Naive thymus-derived CD4-positive, alpha-beta T cell (primary cell): ENCODE measurements at regions of chr12 and their contacts with region 1.

Region 1: GRCh38 chr12:48903982-48904411 is 21.3 kb downstream of the FKBP11 start:
- DNase-seq: peak; percentile 64 to 89 (median 83)
- ATAC-seq: peak; percentile 100
- H3K4me3 ChIP-seq: peak overlapping the region; percentile 60
- H3K4me3 Mint-ChIP-seq: peak overlapping the region; percentile 48 to 81 (median 78)
- H3K27ac ChIP-seq: no peak overlapping the region
- H3K27ac Mint-ChIP-seq: peak overlapping the region in 5 of 9 donors; percentile 32 to 84 (median 57)
- H3K4me1 ChIP-seq: peaks cover 0 to 9% of the 10 kb centered on the region in 2 donors
- H3K4me1 Mint-ChIP-seq: peaks cover 0 to 11% (median 8%) of the 10 kb centered on the region in 7 donors
- H3K27me3 ChIP-seq: no peaks in the 10 kb centered on the region
- H3K27me3 Mint-ChIP-seq: peaks cover 0 to 7% (median 0%) of the 10 kb centered on the region in 5 donors

Region 2: GRCh38 chr12:48788854-48789796 is 114.9 kb before region 1 on chr12 and contains the start of gene ADCY6:
- CTCF ChIA-PET with region 1: no interaction called
- POLR2A ChIA-PET with region 1: no interaction called
- intact Hi-C with region 1: no loop called
- DNase-seq: peak in 1 of 9 donors; percentile 8
- ATAC-seq: peak; percentile 34
- H3K4me3 ChIP-seq: no peak within 1 kb of the TSS
- H3K4me3 Mint-ChIP-seq: peak within 1 kb of the TSS; percentile 59 to 86 (median 66)
- H3K27ac ChIP-seq: no peak within 1 kb of the TSS
- H3K27ac Mint-ChIP-seq: no peak within 1 kb of the TSS
- H3K4me1 ChIP-seq: no peaks in the 10 kb centered on the region
- H3K4me1 Mint-ChIP-seq: peaks cover 5 to 14% (median 10%) of the 10 kb centered on the region in 7 donors
- H3K27me3 ChIP-seq: peaks cover 12 to 15% of the 10 kb centered on the region in 2 donors
- H3K27me3 Mint-ChIP-seq: peaks cover 44 to 65% (median 53%) of the 10 kb centered on the region in 5 donors
- total RNA-seq, gene ADCY6: 0.07 to 0.22 (median 0.08) TPM in 3 of 5 experiments, not detected in the others

Region 3: DNA sequence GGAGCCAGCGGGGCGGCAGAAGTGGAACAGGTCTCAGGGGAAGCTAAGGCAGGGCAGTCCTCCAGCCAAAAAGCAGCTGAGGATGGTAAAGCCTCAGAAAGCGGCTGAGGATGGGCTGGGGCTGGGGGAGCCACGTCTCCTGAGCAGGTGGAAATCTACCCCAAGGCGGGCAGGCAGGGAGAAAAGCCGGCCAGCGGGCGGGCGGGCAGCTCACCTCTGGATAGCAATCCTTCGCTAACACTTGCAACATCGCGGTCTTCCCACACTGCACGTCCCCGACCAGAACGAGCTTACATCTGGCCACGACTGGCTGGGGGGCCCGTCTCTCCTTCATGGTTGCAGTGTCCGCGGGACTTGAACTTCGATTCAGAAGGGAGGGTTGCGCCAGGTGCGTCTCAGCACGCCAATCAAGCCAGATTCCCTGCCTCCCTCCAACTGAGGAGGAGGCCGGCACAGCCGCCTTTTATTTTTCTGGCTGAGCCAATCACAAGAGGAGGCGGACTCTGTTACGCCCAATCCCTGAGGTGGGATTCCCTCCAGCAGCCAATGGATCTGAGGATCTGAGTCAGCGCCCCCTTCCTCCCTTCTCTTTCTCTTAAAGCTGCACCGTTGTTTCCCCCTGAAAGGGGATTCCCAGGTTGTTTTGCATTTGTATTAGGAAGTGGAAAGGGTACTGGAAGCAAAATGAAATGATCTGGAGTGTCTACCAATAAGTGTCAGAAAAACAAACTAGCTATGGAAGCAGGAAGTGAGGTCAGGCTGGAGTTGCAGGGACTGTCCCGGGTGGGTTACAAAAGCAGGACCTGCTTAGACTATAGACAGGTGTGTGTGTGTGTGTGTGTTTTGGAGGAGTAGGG is 38.3 kb before region 1 on chr12 and contains the start of gene RND1:
- CTCF ChIA-PET with region 1: no interaction called
- POLR2A ChIA-PET with region 1: no interaction called
- intact Hi-C with region 1: no loop called
- DNase-seq: peak; percentile 50 to 92 (median 82)
- ATAC-seq: peak; percentile 96
- H3K4me3 ChIP-seq: peak within 1 kb of the TSS; percentile 69
- H3K4me3 Mint-ChIP-seq: peak within 1 kb of the TSS; percentile 87 to 95 (median 94)
- H3K27ac ChIP-seq: peak within 1 kb of the TSS; percentile 62
- H3K27ac Mint-ChIP-seq: peak within 1 kb of the TSS; percentile 66 to 96 (median 85)
- H3K4me1 ChIP-seq: peaks cover 10 to 11% of the 10 kb centered on the region in 2 donors
- H3K4me1 Mint-ChIP-seq: peaks cover 15 to 28% (median 25%) of the 10 kb centered on the region in 7 donors
- H3K27me3 ChIP-seq: no peaks in the 10 kb centered on the region
- H3K27me3 Mint-ChIP-seq: peaks cover 23 to 40% (median 28%) of the 10 kb centered on the region in 5 donors
- total RNA-seq, gene RND1: 1.1 to 13.5 (median 2.3) TPM

Region 4: GRCh38 chr12:48890657-48891418 is 13.2 kb before region 1 on chr12:
- CTCF ChIA-PET with region 1: interaction called, 19 read pairs
- POLR2A ChIA-PET with region 1: interaction called, 3 read pairs
- intact Hi-C with region 1: no loop called
- DNase-seq: peak; percentile 51 to 79 (median 64)
- ATAC-seq: peak; percentile 97
- H3K4me3 ChIP-seq: no peak overlapping the region
- H3K4me3 Mint-ChIP-seq: peak overlapping the region in 4 of 10 donors; percentile 2 to 39 (median 16)
- H3K27ac ChIP-seq: no peak overlapping the region
- H3K27ac Mint-ChIP-seq: peak overlapping the region in 1 of 9 donors; percentile 65
- H3K4me1 ChIP-seq: peaks cover 8% of the 10 kb centered on the region in 2 donors
- H3K4me1 Mint-ChIP-seq: peaks cover 0 to 10% (median 0%) of the 10 kb centered on the region in 7 donors
- H3K27me3 ChIP-seq: peaks cover 0 to 4% of the 10 kb centered on the region in 2 donors
- H3K27me3 Mint-ChIP-seq: peaks cover 12 to 30% (median 15%) of the 10 kb centered on the region in 5 donors

Region 5: GRCh38 chr12:48917857-48918537 is 14.0 kb after region 1 on chr12:
- CTCF ChIA-PET with region 1: interaction called, 21 read pairs
- POLR2A ChIA-PET with region 1: interaction called, 9 read pairs
- intact Hi-C with region 1: loop called (anchors 1 kb)
- DNase-seq: peak in 7 of 9 donors; percentile 39 to 63 (median 57)
- ATAC-seq: peak; percentile 89
- H3K4me3 ChIP-seq: peak overlapping the region; percentile 57
- H3K4me3 Mint-ChIP-seq: peak overlapping the region; percentile 84 to 92 (median 88)
- H3K27ac ChIP-seq: peak overlapping the region; percentile 73
- H3K27ac Mint-ChIP-seq: peak overlapping the region; percentile 81 to 94 (median 90)
- H3K4me1 ChIP-seq: peaks cover 14 to 25% of the 10 kb centered on the region in 2 donors
- H3K4me1 Mint-ChIP-seq: peaks cover 20 to 46% (median 43%) of the 10 kb centered on the region in 7 donors
- H3K27me3 ChIP-seq: no peaks in the 10 kb centered on the region
- H3K27me3 Mint-ChIP-seq: no peaks in the 10 kb centered on the region

Region 6: DNA sequence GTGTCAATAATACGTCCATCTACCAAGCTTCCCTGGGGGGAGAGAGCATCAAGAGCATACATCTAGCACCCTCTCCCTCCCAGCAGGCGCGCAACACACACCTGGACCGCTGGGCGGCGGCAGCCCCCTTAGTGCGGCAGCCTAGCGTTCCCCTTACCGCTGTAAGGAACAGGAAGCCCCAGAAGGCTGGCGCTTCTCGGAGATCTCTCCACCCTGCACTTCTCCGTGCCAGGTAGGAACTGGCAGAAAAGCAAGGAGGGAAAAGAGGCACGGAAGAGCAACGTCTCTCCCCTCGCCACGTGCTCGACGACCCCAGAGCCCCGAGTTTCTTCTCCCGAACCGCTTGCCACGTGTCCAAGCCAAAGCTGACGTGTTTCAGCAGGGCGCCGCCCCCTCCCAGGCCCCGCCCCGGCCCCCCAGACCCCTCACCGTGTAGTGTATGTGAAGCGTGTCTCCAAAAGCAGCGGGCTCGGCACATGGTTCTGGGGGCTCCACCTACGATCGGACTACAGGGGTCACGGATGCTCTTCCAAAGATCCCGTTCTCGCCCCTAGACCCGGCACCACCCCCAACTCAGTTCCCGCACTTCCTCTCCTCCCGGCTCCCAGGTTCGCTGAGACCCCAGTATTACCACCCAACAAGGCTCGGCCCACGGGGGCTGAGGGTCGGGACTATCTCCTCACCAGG is 20.8 kb after region 1 on chr12:
- CTCF ChIA-PET with region 1: interaction called, 21 read pairs
- POLR2A ChIA-PET with region 1: interaction called, 14 read pairs
- intact Hi-C with region 1: loop called (anchors 1 kb)
- DNase-seq: peak; percentile 56 to 80 (median 77)
- ATAC-seq: peak; percentile 86
- H3K4me3 ChIP-seq: peak overlapping the region; percentile 72
- H3K4me3 Mint-ChIP-seq: peak overlapping the region; percentile 89 to 98 (median 93)
- H3K27ac ChIP-seq: peak overlapping the region; percentile 99
- H3K27ac Mint-ChIP-seq: peak overlapping the region; percentile 74 to 98 (median 95)
- H3K4me1 ChIP-seq: peaks cover 10 to 18% of the 10 kb centered on the region in 2 donors
- H3K4me1 Mint-ChIP-seq: peaks cover 18 to 52% (median 42%) of the 10 kb centered on the region in 7 donors
- H3K27me3 ChIP-seq: no peaks in the 10 kb centered on the region
- H3K27me3 Mint-ChIP-seq: no peaks in the 10 kb centered on the region

Region 7: GRCh38 chr12:48977315-48978281 is 73.6 kb after region 1 on chr12:
- CTCF ChIA-PET with region 1: interaction called, 4 read pairs
- POLR2A ChIA-PET with region 1: no interaction called
- intact Hi-C with region 1: loop called (anchors 1 to 2 kb)
- DNase-seq: peak; percentile 52 to 90 (median 75)
- ATAC-seq: peak; percentile 77
- H3K4me3 ChIP-seq: no peak overlapping the region
- H3K4me3 Mint-ChIP-seq: peak overlapping the region; percentile 24 to 85 (median 56)
- H3K27ac ChIP-seq: no peak overlapping the region
- H3K27ac Mint-ChIP-seq: peak overlapping the region in 7 of 9 donors; percentile 26 to 81 (median 61)
- H3K4me1 ChIP-seq: peaks cover 37% of the 10 kb centered on the region in 2 donors
- H3K4me1 Mint-ChIP-seq: peaks cover 28 to 53% (median 47%) of the 10 kb centered on the region in 7 donors
- H3K27me3 ChIP-seq: peaks cover 3 to 11% of the 10 kb centered on the region in 2 donors
- H3K27me3 Mint-ChIP-seq: peaks cover 18 to 92% (median 40%) of the 10 kb centered on the region in 5 donors

Region 8: GRCh38 chr12:48988030-48988649 is 84.1 kb after region 1 on chr12:
- CTCF ChIA-PET with region 1: interaction called, 12 read pairs
- POLR2A ChIA-PET with region 1: no interaction called
- intact Hi-C with region 1: loop called in 1 of 2 experiments (anchors 1 kb)
- DNase-seq: peak in 8 of 9 donors; percentile 45 to 82 (median 60)
- ATAC-seq: peak; percentile 90
- H3K4me3 ChIP-seq: no peak overlapping the region
- H3K4me3 Mint-ChIP-seq: no peak overlapping the region
- H3K27ac ChIP-seq: no peak overlapping the region
- H3K27ac Mint-ChIP-seq: no peak overlapping the region
- H3K4me1 ChIP-seq: no peaks in the 10 kb centered on the region
- H3K4me1 Mint-ChIP-seq: peaks cover 0 to 12% (median 8%) of the 10 kb centered on the region in 7 donors
- H3K27me3 ChIP-seq: no peaks in the 10 kb centered on the region
- H3K27me3 Mint-ChIP-seq: peaks cover 21 to 79% (median 31%) of the 10 kb centered on the region in 5 donors